ENCODE measurements at regions of chr7 and their contacts with region 1.

Region 1: GRCh38 chr7:27835376-27835775 is 95.4 kb downstream of the TAX1BP1 start:
- DNase-seq: no peak
- ATAC-seq: peak in 6 of 8 donors; percentile 34 to 79 (median 62)
- H3K4me3 ChIP-seq: no peak overlapping the region
- H3K27ac ChIP-seq: peak overlapping the region; percentile 42 to 75 (median 60)
- H3K4me1 ChIP-seq: peaks cover 0 to 32% (median 12%) of the 10 kb centered on the region in 9 donors
- H3K27me3 ChIP-seq: no peaks in the 10 kb centered on the region
- CTCF ChIP-seq: no peak

Region 2: GRCh38 chr7:27850531-27850930 is 15.2 kb after region 1 on chr7:
- intact Hi-C with region 1: no loop called
- DNase-seq: no peak
- ATAC-seq: no peak
- H3K4me3 ChIP-seq: no peak overlapping the region
- H3K27ac ChIP-seq: no peak overlapping the region
- H3K4me1 ChIP-seq: no peaks in the 10 kb centered on the region
- H3K27me3 ChIP-seq: no peaks in the 10 kb centered on the region
- CTCF ChIP-seq: no peak

Region 3: DNA sequence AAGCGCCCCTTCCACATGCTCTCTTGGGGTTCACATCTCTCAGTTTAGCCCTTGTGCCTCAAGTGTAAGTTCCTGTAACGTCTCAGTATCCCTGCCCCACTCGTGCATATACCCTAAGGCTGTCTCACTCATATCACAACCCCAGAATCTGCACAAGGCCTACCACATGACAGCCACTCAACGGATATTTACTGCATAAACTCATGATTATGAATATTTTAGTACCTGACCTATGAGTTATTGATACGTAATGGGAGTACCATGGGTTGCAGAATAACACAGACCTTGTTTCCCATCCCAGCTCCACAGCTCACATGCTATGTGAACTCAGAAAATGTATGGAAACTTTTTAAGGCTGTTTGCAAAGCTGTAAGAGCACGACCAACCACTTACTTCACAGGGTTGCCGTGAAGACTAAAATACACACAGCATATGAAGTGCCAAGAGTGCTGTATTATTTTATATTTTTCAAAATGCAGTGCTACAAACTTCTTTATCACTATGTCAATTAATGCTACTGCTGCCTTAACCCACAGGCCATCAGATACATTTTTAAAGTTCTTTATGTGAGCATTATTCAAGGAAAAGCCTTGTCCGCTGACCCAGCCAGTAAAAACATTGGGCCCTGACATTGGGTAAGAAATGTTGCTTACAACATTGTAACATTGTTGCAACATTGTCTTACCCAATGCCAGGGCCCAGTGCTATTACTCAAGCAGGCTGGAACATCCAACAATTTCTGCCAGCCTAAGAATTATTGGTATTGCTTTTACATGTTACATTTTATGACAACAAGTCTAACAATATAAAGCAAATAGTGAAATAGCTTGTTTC is 248.0 kb after region 1 on chr7:
- intact Hi-C with region 1: loop called in 1 of 10 experiments (anchors 5 kb)
- DNase-seq: no peak
- ATAC-seq: peak in 3 of 8 donors; percentile 42 to 72 (median 43)
- H3K4me3 ChIP-seq: no peak overlapping the region
- H3K27ac ChIP-seq: peak overlapping the region in 1 of 10 donors; percentile 84
- H3K4me1 ChIP-seq: peaks cover 0 to 90% (median 21%) of the 10 kb centered on the region in 9 donors
- H3K27me3 ChIP-seq: no peaks in the 10 kb centered on the region
- CTCF ChIP-seq: no peak

Region 4: GRCh38 chr7:28155019-28155660 is 319.8 kb after region 1 on chr7:
- intact Hi-C with region 1: no loop called
- DNase-seq: no peak
- ATAC-seq: peak in 3 of 8 donors; percentile 11 to 39 (median 26)
- H3K4me3 ChIP-seq: no peak overlapping the region
- H3K27ac ChIP-seq: peak overlapping the region in 5 of 10 donors; percentile 1 to 66 (median 26)
- H3K4me1 ChIP-seq: peaks cover 0 to 72% (median 44%) of the 10 kb centered on the region in 9 donors
- H3K27me3 ChIP-seq: no peaks in the 10 kb centered on the region
- CTCF ChIP-seq: no peak

Measured in heart right ventricle (tissue), 16 donors.